CD4-positive, alpha-beta T cell (primary cell): ENCODE measurements at regions of chr1 and their contacts with region 1.

Region 1: GRCh38 chr1:64996541-64997255 is 30.3 kb upstream of the JAK1 start:
- DNase-seq: no peak
- ATAC-seq: no peak
- H3K4me3 ChIP-seq: no peak overlapping the region
- H3K4me3 Mint-ChIP-seq: no peak overlapping the region
- H3K27ac ChIP-seq: no peak overlapping the region
- H3K27ac Mint-ChIP-seq: no peak overlapping the region
- H3K4me1 ChIP-seq: peaks cover 11% of the 10 kb centered on the region
- H3K4me1 Mint-ChIP-seq: peaks cover 10% of the 10 kb centered on the region
- H3K27me3 ChIP-seq: no peaks in the 10 kb centered on the region
- H3K27me3 Mint-ChIP-seq: no peaks in the 10 kb centered on the region
- CTCF ChIP-seq: no peak

Region 2: DNA sequence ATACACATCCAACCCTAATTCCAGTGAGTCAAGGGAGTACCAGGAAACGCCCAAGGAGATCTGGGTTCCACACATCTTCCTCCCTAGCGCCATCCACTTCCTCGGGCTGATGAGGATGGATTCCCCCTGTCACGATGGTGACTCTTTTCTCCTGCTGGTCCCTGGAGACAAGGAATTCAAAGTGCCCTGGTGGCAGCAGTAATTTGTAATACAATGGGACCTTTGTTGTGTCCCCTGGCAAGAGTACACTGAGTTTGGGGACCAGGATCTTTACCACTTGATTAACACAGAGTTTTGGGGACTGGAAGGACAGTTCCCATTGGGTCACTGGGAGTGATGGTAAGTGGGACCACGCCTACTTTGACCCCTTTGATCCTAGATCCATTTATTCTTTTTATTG is 21.0 kb before region 1 on chr1:
- CTCF ChIA-PET with region 1: no interaction called
- POLR2A ChIA-PET with region 1: no interaction called
- intact Hi-C with region 1: loop called in 1 of 2 experiments (anchors 2 kb)
- DNase-seq: no peak
- ATAC-seq: no peak
- H3K4me3 ChIP-seq: no peak overlapping the region
- H3K4me3 Mint-ChIP-seq: no peak overlapping the region
- H3K27ac ChIP-seq: no peak overlapping the region
- H3K27ac Mint-ChIP-seq: no peak overlapping the region
- H3K4me1 ChIP-seq: no peaks in the 10 kb centered on the region
- H3K4me1 Mint-ChIP-seq: peaks cover 5% of the 10 kb centered on the region
- H3K27me3 ChIP-seq: no peaks in the 10 kb centered on the region
- H3K27me3 Mint-ChIP-seq: no peaks in the 10 kb centered on the region
- CTCF ChIP-seq: no peak

Region 3: DNA sequence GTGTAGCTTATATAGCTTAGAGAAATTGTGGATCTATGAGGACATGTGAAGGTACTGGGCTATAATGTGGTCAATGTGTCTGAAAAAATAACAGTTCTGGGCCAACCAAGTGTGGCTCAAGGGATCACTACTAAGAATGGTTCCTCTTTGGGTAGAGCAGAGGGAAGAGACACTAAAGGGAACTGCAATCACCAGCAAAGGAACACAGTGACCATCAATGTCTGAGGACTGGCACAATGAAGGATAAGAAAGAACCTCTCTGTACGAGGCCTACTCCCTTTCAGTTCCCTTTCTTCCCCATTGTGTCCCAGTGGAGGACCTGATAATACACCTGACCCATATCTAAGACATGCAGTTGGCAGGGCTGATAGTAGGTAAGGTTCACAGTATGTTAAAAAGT is 59.5 kb after region 1 on chr1:
- CTCF ChIA-PET with region 1: no interaction called
- POLR2A ChIA-PET with region 1: no interaction called
- intact Hi-C with region 1: no loop called
- DNase-seq: peak in 1 of 14 experiments; percentile 25
- ATAC-seq: no peak
- H3K4me3 ChIP-seq: no peak overlapping the region
- H3K4me3 Mint-ChIP-seq: no peak overlapping the region
- H3K27ac ChIP-seq: no peak overlapping the region
- H3K27ac Mint-ChIP-seq: peak overlapping the region; percentile 26
- H3K4me1 ChIP-seq: peaks cover 7% of the 10 kb centered on the region
- H3K4me1 Mint-ChIP-seq: peaks cover 41% of the 10 kb centered on the region
- H3K27me3 ChIP-seq: no peaks in the 10 kb centered on the region
- H3K27me3 Mint-ChIP-seq: no peaks in the 10 kb centered on the region
- CTCF ChIP-seq: no peak